AG04450 (cell line): ENCODE measurements at regions of chr9 and their contacts with region 1.

Region 1: DNA sequence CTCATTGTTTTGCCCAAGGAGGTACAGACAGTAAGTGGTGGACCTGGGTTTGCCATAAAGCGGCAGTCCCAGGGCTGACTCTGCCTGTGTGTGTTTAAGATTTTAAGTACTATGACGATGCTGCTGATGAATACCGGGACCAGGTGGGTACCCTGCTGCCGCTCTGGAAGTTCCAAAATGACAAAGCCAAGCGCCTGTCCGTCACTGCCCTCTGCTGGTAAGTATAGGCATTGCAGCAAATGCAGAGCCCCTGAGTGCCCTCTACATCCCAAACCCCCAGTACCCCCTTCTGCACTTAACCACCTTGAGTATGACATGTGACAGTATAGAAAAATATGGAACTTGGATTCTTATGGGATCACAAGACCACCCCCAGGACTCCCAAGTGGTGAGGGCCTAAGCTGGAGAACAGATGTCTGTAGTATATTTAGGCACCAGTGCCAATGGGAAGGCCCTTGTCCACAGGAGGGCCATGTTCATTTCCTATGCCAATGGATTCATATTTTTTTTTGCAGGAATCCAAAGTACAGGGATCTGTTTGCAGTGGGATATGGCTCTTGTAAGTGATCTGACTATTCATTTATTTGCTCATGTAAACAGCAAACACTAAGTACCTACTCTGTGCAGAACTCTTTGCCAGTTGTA is 22.0 kb downstream of the ENHO start:
- DNase-seq: no peak
- H3K4me3 ChIP-seq: no peak overlapping the region
- H3K27ac ChIP-seq: no peak overlapping the region
- H3K27me3 ChIP-seq: peaks cover 48% of the 10 kb centered on the region
- CTCF ChIP-seq: peak; percentile 98

Region 2: GRCh38 chr9:34332076-34332964 is 168.4 kb before region 1 on chr9:
- CTCF ChIA-PET with region 1: interaction called, 28 read pairs
- POLR2A ChIA-PET with region 1: no interaction called
- DNase-seq: no peak
- H3K4me3 ChIP-seq: no peak overlapping the region
- H3K27ac ChIP-seq: no peak overlapping the region
- H3K27me3 ChIP-seq: no peaks in the 10 kb centered on the region
- CTCF ChIP-seq: peak; percentile 58

Region 3: GRCh38 chr9:34437006-34437925 is 63.5 kb before region 1 on chr9:
- CTCF ChIA-PET with region 1: interaction called, 58 read pairs
- POLR2A ChIA-PET with region 1: interaction called, 3 read pairs
- DNase-seq: no peak
- H3K4me3 ChIP-seq: no peak overlapping the region
- H3K27ac ChIP-seq: no peak overlapping the region
- H3K27me3 ChIP-seq: no peaks in the 10 kb centered on the region
- CTCF ChIP-seq: peak; percentile 87

Region 4: GRCh38 chr9:34457266-34458012 is 43.3 kb before region 1 on chr9:
- CTCF ChIA-PET with region 1: interaction called, 10 read pairs
- POLR2A ChIA-PET with region 1: no interaction called
- DNase-seq: no peak
- H3K4me3 ChIP-seq: peak overlapping the region; percentile 85
- H3K27ac ChIP-seq: peak overlapping the region; percentile 68
- H3K27me3 ChIP-seq: peaks cover 9% of the 10 kb centered on the region
- CTCF ChIP-seq: no peak

Region 5: GRCh38 chr9:34591248-34591916 is 90.6 kb after region 1 on chr9:
- CTCF ChIA-PET with region 1: interaction called, 26 read pairs
- POLR2A ChIA-PET with region 1: no interaction called
- DNase-seq: peak; percentile 32
- H3K4me3 ChIP-seq: no peak overlapping the region
- H3K27ac ChIP-seq: no peak overlapping the region
- H3K27me3 ChIP-seq: peaks cover 74% of the 10 kb centered on the region
- CTCF ChIP-seq: peak; percentile 85